CD8-positive, alpha-beta T cell (primary cell): ENCODE measurements at regions of chr10 and their contacts with region 1.

Region 1: GRCh38 chr10:30591249-30591670 is 38.3 kb downstream of the LYZL2 start:
- DNase-seq: peak in 6 of 9 experiments; percentile 23 to 78 (median 57)
- ATAC-seq: peak; percentile 85
- H3K4me3 ChIP-seq: no peak overlapping the region
- H3K4me3 Mint-ChIP-seq: no peak overlapping the region
- H3K27ac ChIP-seq: no peak overlapping the region
- H3K27ac Mint-ChIP-seq: no peak overlapping the region
- H3K4me1 ChIP-seq: no peaks in the 10 kb centered on the region
- H3K4me1 Mint-ChIP-seq: no peaks in the 10 kb centered on the region
- H3K27me3 ChIP-seq: no peaks in the 10 kb centered on the region
- H3K27me3 Mint-ChIP-seq: peaks cover 16% of the 10 kb centered on the region
- CTCF ChIP-seq: peak; percentile 84

Region 2: DNA sequence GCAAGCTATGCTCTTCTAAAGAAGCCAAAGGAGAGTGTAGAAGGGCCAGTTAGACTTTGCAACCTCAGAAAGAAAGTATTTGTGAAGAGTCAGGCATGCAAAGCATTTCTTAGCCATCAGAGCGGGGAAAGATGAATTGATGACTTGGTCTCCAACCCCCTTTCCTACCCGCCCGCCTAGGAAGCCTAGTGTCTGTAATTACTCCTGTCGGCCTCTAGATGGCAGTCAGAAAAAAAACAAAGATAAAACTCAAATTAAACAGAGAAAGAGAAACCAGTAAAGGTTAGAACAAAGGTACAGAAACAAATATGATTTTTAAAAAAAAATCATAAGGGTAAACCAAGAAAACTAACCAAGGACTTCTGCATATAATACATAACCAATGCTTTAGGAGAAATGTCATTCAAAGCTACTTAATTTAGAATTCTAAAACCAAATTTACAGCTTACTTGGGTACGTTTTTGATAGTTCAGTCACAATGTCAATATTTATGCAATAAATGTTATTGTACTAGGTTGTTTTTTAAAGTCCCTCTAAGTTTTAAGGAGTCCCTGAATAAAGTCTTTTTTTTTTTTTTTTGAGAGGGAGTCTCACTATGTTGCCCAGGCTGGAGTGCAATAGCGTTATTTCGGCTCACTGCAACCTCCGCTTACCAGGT is 1204.8 kb before region 1 on chr10:
- CTCF ChIA-PET with region 1: no interaction called
- POLR2A ChIA-PET with region 1: no interaction called
- intact Hi-C with region 1: loop called in 1 of 2 experiments (anchors 5 kb)
- DNase-seq: peak in 3 of 9 experiments; percentile 21 to 56 (median 43)
- ATAC-seq: peak; percentile 94
- H3K4me3 ChIP-seq: no peak overlapping the region
- H3K4me3 Mint-ChIP-seq: peak overlapping the region; percentile 52
- H3K27ac ChIP-seq: no peak overlapping the region
- H3K27ac Mint-ChIP-seq: no peak overlapping the region
- H3K4me1 ChIP-seq: no peaks in the 10 kb centered on the region
- H3K4me1 Mint-ChIP-seq: peaks cover 4% of the 10 kb centered on the region
- H3K27me3 ChIP-seq: no peaks in the 10 kb centered on the region
- H3K27me3 Mint-ChIP-seq: no peaks in the 10 kb centered on the region
- CTCF ChIP-seq: peak; percentile 79

Region 3: DNA sequence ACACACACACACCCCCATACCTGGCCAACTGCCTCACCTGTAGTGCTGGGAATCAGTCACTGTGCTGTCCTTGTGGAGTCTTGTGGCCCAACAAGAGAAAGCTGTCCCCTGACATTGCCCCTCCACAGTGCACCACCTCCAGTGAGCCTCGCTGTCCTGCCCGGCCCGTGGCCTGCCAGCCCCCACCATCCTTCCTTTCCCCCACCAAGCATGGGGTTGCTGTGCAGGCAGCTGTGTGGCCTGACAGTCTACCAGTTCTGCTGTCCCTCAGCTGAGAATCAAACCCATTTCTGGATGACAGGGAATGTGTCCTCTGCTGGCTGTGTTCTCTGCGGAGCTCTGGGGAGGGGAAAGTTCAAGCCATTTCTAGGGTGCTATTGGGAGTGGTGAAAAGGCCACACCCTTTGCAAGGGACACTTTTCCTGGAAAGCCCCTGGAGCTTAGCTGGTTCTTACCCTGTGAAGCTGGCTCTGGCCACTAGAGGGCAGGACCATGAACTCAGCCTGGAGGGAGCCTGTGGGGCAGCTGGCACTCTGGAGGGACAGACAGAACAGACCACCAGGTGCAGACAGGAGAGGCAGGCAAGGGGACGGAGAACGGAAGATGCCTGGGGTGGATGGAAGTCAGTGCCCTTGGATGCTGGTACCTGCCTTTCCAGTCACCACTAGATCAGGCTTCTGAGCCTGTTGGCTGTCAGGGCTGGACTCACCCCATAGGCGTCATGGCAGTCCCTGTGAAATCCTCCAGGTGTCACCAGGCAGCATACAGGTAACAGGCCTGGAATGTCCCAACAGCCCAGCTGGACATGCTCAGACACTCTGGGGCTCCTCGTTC is 231.7 kb before region 1 on chr10:
- CTCF ChIA-PET with region 1: interaction called, 56 read pairs
- POLR2A ChIA-PET with region 1: no interaction called
- intact Hi-C with region 1: loop called in 1 of 2 experiments (anchors 1 kb)
- DNase-seq: peak; percentile 30 to 76 (median 59)
- ATAC-seq: peak; percentile 88
- H3K4me3 ChIP-seq: no peak overlapping the region
- H3K4me3 Mint-ChIP-seq: no peak overlapping the region
- H3K27ac ChIP-seq: no peak overlapping the region
- H3K27ac Mint-ChIP-seq: no peak overlapping the region
- H3K4me1 ChIP-seq: peaks cover 3% of the 10 kb centered on the region
- H3K4me1 Mint-ChIP-seq: no peaks in the 10 kb centered on the region
- H3K27me3 ChIP-seq: peaks cover 0 to 4% of the 10 kb centered on the region in 2 experiments
- H3K27me3 Mint-ChIP-seq: peaks cover 3% of the 10 kb centered on the region
- CTCF ChIP-seq: peak; percentile 60

Region 4: GRCh38 chr10:30378201-30379006 is 212.9 kb before region 1 on chr10:
- CTCF ChIA-PET with region 1: interaction called, 10 read pairs
- POLR2A ChIA-PET with region 1: no interaction called
- intact Hi-C with region 1: no loop called
- DNase-seq: no peak
- ATAC-seq: no peak
- H3K4me3 ChIP-seq: no peak overlapping the region
- H3K4me3 Mint-ChIP-seq: no peak overlapping the region
- H3K27ac ChIP-seq: no peak overlapping the region
- H3K27ac Mint-ChIP-seq: no peak overlapping the region
- H3K4me1 ChIP-seq: peaks cover 9% of the 10 kb centered on the region
- H3K4me1 Mint-ChIP-seq: no peaks in the 10 kb centered on the region
- H3K27me3 ChIP-seq: no peaks in the 10 kb centered on the region
- H3K27me3 Mint-ChIP-seq: peaks cover 3% of the 10 kb centered on the region
- CTCF ChIP-seq: no peak

Region 5: GRCh38 chr10:30398788-30399187 is 192.5 kb before region 1 on chr10:
- CTCF ChIA-PET with region 1: interaction called, 220 read pairs
- POLR2A ChIA-PET with region 1: interaction called, 3 read pairs
- intact Hi-C with region 1: no loop called
- DNase-seq: peak in 2 of 9 experiments; percentile 19 to 52
- ATAC-seq: peak; percentile 76
- H3K4me3 ChIP-seq: no peak overlapping the region
- H3K4me3 Mint-ChIP-seq: no peak overlapping the region
- H3K27ac ChIP-seq: no peak overlapping the region
- H3K27ac Mint-ChIP-seq: no peak overlapping the region
- H3K4me1 ChIP-seq: peaks cover 28% of the 10 kb centered on the region
- H3K4me1 Mint-ChIP-seq: peaks cover 15% of the 10 kb centered on the region
- H3K27me3 ChIP-seq: no peaks in the 10 kb centered on the region
- H3K27me3 Mint-ChIP-seq: peaks cover 8% of the 10 kb centered on the region
- CTCF ChIP-seq: no peak

Region 6: GRCh38 chr10:30542001-30542894 is 49.0 kb before region 1 on chr10:
- CTCF ChIA-PET with region 1: interaction called, 17 read pairs
- POLR2A ChIA-PET with region 1: no interaction called
- intact Hi-C with region 1: no loop called
- DNase-seq: peak in 1 of 9 experiments; percentile 32
- ATAC-seq: no peak
- H3K4me3 ChIP-seq: no peak overlapping the region
- H3K4me3 Mint-ChIP-seq: no peak overlapping the region
- H3K27ac ChIP-seq: no peak overlapping the region
- H3K27ac Mint-ChIP-seq: no peak overlapping the region
- H3K4me1 ChIP-seq: no peaks in the 10 kb centered on the region
- H3K4me1 Mint-ChIP-seq: no peaks in the 10 kb centered on the region
- H3K27me3 ChIP-seq: no peaks in the 10 kb centered on the region
- H3K27me3 Mint-ChIP-seq: no peaks in the 10 kb centered on the region
- CTCF ChIP-seq: no peak